ENCODE measurements at regions of chr18 and their contacts with region 1.

Region 1: GRCh38 chr18:24176727-24177416 is 38.0 kb downstream of the CABYR start:
- DNase-seq: peak; percentile 76
- H3K4me3 Mint-ChIP-seq: no peak overlapping the region
- H3K27ac Mint-ChIP-seq: no peak overlapping the region
- H3K4me1 Mint-ChIP-seq: peaks cover 8% of the 10 kb centered on the region
- H3K27me3 Mint-ChIP-seq: no peaks in the 10 kb centered on the region

Region 2: GRCh38 chr18:24086082-24086481 is 90.8 kb before region 1 on chr18:
- intact Hi-C with region 1: no loop called
- DNase-seq: no peak
- H3K4me3 Mint-ChIP-seq: no peak overlapping the region
- H3K27ac Mint-ChIP-seq: no peak overlapping the region
- H3K4me1 Mint-ChIP-seq: peaks cover 12% of the 10 kb centered on the region
- H3K27me3 Mint-ChIP-seq: no peaks in the 10 kb centered on the region

Region 3: GRCh38 chr18:24212939-24213338 is 36.1 kb after region 1 on chr18:
- intact Hi-C with region 1: no loop called
- DNase-seq: no peak
- H3K4me3 Mint-ChIP-seq: no peak overlapping the region
- H3K27ac Mint-ChIP-seq: no peak overlapping the region
- H3K4me1 Mint-ChIP-seq: no peaks in the 10 kb centered on the region
- H3K27me3 Mint-ChIP-seq: peaks cover 21% of the 10 kb centered on the region

Region 4: GRCh38 chr18:24231773-24232735 is 55.2 kb after region 1 on chr18:
- intact Hi-C with region 1: no loop called
- DNase-seq: no peak
- H3K4me3 Mint-ChIP-seq: no peak overlapping the region
- H3K27ac Mint-ChIP-seq: no peak overlapping the region
- H3K4me1 Mint-ChIP-seq: no peaks in the 10 kb centered on the region
- H3K27me3 Mint-ChIP-seq: no peaks in the 10 kb centered on the region

Region 5: DNA sequence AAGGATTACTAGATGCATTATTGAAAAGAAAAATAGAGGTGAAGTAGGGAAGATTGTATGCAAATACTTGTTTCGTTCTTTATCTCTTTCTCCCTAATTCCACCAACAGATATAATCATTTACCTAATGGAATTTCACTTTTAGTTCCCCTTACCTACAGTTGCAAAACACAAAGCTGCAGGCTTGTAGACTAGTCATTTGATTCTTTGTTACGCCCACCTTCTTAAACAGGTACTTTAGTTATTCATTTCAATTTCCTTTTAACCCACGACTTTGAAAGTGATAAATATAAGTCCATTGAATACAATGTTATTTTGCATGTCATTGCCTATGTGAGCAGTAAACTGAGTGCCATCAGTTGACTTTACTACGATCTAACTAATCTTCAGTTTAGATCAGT is 279.7 kb after region 1 on chr18:
- intact Hi-C with region 1: no loop called
- DNase-seq: no peak
- H3K4me3 Mint-ChIP-seq: no peak overlapping the region
- H3K27ac Mint-ChIP-seq: peak overlapping the region; percentile 70
- H3K4me1 Mint-ChIP-seq: peaks cover 26% of the 10 kb centered on the region
- H3K27me3 Mint-ChIP-seq: no peaks in the 10 kb centered on the region

Region 6: GRCh38 chr18:24488824-24489493 is 312.1 kb after region 1 on chr18:
- intact Hi-C with region 1: loop called (anchors 1 kb)
- DNase-seq: peak; percentile 76
- H3K4me3 Mint-ChIP-seq: no peak overlapping the region
- H3K27ac Mint-ChIP-seq: no peak overlapping the region
- H3K4me1 Mint-ChIP-seq: peaks cover 7% of the 10 kb centered on the region
- H3K27me3 Mint-ChIP-seq: peaks cover 16% of the 10 kb centered on the region

Region 7: DNA sequence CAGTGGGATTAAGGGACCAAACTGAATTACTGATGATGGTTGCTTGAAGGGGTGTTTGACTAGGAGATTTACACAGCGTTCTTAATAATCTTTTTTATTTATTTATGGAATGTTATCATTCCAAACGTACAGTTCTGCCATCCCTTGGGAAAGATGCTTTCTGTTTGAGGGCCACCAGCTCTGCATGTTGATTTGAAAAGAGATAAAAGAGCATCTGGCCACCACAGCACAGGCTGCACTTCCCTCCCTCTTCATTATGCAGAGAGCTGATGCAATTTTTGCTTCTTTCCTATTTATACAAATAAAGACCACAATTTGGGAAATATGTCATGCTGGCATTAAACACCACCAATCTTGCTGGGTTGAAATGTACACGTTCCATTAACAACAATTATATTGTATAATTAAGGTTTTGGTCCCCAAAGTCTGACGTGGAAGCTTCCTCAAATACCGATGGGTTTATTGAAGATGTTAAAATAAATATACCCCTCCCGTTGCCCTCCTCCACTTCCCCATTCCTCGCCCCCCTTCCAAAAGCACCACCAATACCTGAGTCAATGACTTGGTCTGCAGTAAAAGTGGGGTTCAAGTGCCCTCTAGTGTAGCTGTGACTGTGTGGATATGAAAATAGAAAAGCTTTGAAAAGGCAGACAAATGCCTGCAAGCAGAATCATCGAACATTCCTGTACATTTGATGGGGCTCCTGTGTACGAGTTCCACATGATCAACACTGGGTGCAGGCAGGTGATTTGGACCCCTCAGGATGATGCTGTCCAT is 495.5 kb after region 1 on chr18:
- intact Hi-C with region 1: loop called (anchors 10 kb)
- DNase-seq: no peak
- H3K4me3 Mint-ChIP-seq: no peak overlapping the region
- H3K27ac Mint-ChIP-seq: no peak overlapping the region
- H3K4me1 Mint-ChIP-seq: peaks cover 4% of the 10 kb centered on the region
- H3K27me3 Mint-ChIP-seq: peaks cover 10% of the 10 kb centered on the region